Mammary epithelial cell (primary cell): ENCODE measurements at regions of chr15 and their contacts with region 1.

Region 1: GRCh38 chr15:51982013-51982769 is 10.6 kb upstream of the LEO1 start:
- DNase-seq: peak; percentile 76
- H3K4me3 ChIP-seq: peak overlapping the region; percentile 20 to 25 (median 23)
- H3K27ac ChIP-seq: peak overlapping the region; percentile 75
- H3K4me1 ChIP-seq: peaks cover 8% of the 10 kb centered on the region
- H3K27me3 ChIP-seq: no peaks in the 10 kb centered on the region
- CTCF ChIP-seq: peak; percentile 63 to 72

Region 2: GRCh38 chr15:51917493-51917892 is 64.7 kb before region 1 on chr15:
- CTCF ChIA-PET with region 1: no interaction called
- dilution Hi-C with region 1: no loop called
- in situ Hi-C with region 1: no loop called
- intact Hi-C with region 1: no loop called
- DNase-seq: peak; percentile 62
- H3K4me3 ChIP-seq: no peak overlapping the region
- H3K27ac ChIP-seq: no peak overlapping the region
- H3K4me1 ChIP-seq: no peaks in the 10 kb centered on the region
- H3K27me3 ChIP-seq: no peaks in the 10 kb centered on the region
- CTCF ChIP-seq: peak; percentile 42 to 52

Region 3: DNA sequence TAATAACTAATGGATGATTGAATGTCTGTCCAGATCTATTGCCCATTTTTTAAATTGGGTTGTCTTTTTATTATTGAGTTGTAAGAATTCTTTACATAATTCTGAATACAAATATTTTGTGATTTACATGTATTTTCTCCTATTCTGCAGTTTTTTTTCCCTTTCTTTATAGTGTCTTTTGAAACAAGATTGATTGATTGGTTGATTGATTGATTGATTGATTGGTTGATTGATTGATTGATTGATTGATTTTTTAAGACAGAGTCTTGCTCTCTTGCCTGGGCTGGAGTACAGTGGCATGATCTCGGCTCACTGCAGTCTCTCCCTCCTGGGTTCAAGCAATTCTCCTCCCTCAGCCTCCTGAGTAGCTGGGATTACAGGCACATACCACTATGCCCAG is 71.2 kb after region 1 on chr15:
- CTCF ChIA-PET with region 1: no interaction called
- dilution Hi-C with region 1: no loop called
- in situ Hi-C with region 1: no loop called
- intact Hi-C with region 1: loop called (anchors 1 kb)
- DNase-seq: no peak
- H3K4me3 ChIP-seq: no peak overlapping the region
- H3K27ac ChIP-seq: peak overlapping the region; percentile 81
- H3K4me1 ChIP-seq: peaks cover 28% of the 10 kb centered on the region
- H3K27me3 ChIP-seq: no peaks in the 10 kb centered on the region
- CTCF ChIP-seq: no peak

Region 4: DNA sequence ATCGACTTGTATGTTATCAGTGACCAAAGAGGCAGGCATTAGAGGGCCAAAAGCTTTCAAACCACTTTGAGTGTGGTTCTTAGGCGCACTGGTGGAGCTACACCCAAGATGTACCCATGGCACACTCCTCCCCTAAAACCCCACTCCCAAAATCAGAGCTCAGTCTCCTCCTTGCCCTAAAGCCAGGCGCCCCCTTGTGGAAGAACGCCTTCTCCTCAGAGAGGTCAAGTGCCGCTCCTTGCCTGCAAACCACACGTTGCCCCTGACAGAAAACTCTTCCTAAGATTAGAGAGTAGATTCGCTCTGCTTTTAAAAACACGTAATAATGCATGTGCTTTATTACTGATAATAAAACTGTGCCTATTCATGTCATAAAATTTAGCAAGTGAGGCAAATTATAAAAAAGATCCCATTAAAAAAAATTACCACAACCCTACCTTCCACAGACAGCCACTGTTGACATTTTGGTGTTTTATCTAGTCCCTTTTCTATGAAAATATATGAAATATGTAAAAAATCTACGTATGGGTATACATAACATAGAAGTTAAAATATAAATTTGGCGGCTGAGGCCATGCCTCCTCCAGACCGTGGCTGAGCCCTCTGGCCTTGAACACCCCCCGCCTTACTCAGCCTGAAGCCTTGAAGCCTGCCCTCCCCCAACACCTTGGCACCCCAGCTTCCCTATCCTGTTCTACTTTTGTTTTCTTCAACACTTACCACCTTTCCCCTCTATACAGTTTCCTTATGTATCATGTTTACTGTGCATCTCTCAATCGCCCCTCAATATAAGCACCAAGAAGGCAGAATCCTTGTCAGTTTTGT is 96.9 kb after region 1 on chr15:
- CTCF ChIA-PET with region 1: no interaction called
- dilution Hi-C with region 1: no loop called
- in situ Hi-C with region 1: no loop called
- intact Hi-C with region 1: loop called (anchors 1 kb)
- DNase-seq: no peak
- H3K4me3 ChIP-seq: no peak overlapping the region
- H3K27ac ChIP-seq: peak overlapping the region; percentile 94
- H3K4me1 ChIP-seq: peaks cover 49% of the 10 kb centered on the region
- H3K27me3 ChIP-seq: no peaks in the 10 kb centered on the region
- CTCF ChIP-seq: peak; percentile 66 to 79

Region 5: DNA sequence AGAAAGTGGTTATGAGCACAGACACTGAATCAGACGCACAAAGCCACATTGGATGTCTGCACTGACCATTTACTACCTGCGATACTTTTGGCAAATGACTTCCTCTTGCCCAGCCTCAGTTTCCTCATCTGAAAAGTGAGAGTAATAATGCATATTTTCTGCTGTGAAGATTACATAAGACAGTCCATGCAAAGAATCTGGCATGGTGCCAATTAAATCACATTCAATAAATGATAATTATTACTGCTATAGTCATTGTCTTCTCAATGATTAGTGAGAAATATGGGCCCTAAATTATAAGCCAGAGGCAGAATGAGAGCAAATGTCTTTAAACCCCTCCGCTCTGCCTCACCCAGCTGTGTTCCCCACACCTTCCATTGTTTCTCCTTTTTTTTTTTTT is 146.4 kb after region 1 on chr15:
- CTCF ChIA-PET with region 1: no interaction called
- dilution Hi-C with region 1: no loop called
- in situ Hi-C with region 1: no loop called
- intact Hi-C with region 1: no loop called
- DNase-seq: no peak
- H3K4me3 ChIP-seq: no peak overlapping the region
- H3K27ac ChIP-seq: no peak overlapping the region
- H3K4me1 ChIP-seq: peaks cover 10% of the 10 kb centered on the region
- H3K27me3 ChIP-seq: no peaks in the 10 kb centered on the region
- CTCF ChIP-seq: no peak

Region 6: DNA sequence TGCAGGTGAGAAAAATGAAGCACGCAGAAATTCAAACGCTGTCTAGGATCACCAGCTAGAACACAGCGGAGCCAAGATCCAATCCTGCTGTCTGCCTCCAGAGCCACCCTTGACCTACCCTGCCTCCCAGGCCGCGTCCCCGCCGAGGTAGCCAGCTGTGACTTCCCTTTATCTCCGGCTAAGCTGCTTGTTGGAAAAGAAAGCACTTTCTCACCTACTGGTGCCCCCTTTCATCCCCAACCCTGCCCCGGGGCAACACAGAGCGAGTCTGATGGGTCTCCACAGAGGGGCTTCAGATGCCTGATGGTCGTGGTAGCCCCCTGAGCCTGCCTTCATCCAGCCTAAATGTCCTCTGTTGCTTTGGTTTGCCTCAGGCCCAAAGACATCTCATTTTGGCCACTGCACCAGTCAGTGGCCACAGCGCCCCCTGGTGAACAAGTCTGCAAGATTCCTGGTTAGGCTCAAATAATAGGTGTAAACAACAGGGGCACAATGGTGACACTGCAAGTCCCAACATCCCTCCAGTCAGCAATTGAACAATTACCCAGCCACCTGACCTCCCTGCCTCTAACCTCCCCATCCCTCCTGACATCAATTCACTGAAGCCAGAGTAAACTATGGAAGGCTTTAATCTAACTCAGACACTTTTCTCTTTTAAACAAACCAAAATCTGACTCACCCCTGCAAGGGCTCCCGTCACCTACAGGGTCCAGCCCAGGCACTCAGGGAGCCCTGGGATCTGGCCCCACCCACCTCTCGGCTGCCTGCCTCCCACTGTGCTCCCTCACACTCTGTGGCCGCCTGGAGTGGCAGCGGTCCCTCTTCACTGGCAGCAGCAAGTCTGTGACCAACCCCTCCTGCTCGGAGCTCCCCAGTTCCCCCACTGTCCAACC is 157.7 kb after region 1 on chr15:
- CTCF ChIA-PET with region 1: interaction called, 4 read pairs
- dilution Hi-C with region 1: loop called (anchors 5 kb)
- in situ Hi-C with region 1: loop called (anchors 5 to 10 kb)
- intact Hi-C with region 1: loop called (anchors 1 kb)
- DNase-seq: peak; percentile 50
- H3K4me3 ChIP-seq: no peak overlapping the region
- H3K27ac ChIP-seq: no peak overlapping the region
- H3K4me1 ChIP-seq: peaks cover 4% of the 10 kb centered on the region
- H3K27me3 ChIP-seq: no peaks in the 10 kb centered on the region
- CTCF ChIP-seq: peak; percentile 90 to 93

Region 7: DNA sequence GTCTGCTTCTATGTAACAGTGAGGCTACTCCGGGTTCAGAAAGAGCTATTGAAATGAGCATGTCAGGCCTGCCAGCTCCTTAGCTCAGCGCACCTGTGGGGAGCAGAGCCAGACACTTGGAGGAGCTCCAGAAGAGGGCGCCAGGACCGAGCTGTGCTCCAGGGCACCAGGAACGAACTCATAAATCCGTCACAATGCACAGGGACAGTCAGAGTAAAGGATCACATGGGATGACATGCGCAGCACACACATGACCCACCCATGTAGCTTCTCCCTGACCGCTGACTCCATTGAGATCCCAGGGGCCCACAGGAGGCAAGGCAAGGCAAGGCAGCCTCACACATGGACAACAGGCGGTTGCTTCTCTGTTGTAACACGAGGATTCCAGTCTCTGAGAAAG is 235.0 kb after region 1 on chr15:
- CTCF ChIA-PET with region 1: no interaction called
- dilution Hi-C with region 1: no loop called
- in situ Hi-C with region 1: loop called in 1 of 2 experiments (anchors 10 kb)
- intact Hi-C with region 1: no loop called
- DNase-seq: no peak
- H3K4me3 ChIP-seq: no peak overlapping the region
- H3K27ac ChIP-seq: no peak overlapping the region
- H3K4me1 ChIP-seq: no peaks in the 10 kb centered on the region
- H3K27me3 ChIP-seq: no peaks in the 10 kb centered on the region
- CTCF ChIP-seq: peak in 1 of 2 donors; percentile 34

Region 8: DNA sequence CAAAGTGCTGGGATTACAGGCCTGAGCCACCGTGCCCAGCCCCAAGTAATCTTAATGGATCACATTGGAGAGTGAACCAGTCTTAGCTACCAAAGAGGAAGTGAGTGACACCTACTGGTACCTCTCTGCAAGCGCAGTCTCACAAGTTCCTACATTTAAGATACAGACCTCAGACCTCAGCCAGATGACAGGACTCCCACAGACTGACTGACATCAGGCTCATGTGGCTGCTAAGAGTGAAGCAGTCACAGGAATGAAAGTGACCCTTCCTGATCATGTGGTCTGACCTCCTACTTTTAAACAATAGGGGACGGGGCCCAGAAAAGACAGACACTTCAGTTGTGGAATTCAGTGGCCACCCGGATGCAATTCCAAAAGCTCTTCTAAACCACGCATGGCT is 245.3 kb after region 1 on chr15:
- CTCF ChIA-PET with region 1: no interaction called
- dilution Hi-C with region 1: no loop called
- in situ Hi-C with region 1: no loop called
- intact Hi-C with region 1: loop called (anchors 2 kb)
- DNase-seq: peak; percentile 71
- H3K4me3 ChIP-seq: no peak overlapping the region
- H3K27ac ChIP-seq: no peak overlapping the region
- H3K4me1 ChIP-seq: peaks cover 3% of the 10 kb centered on the region
- H3K27me3 ChIP-seq: no peaks in the 10 kb centered on the region
- CTCF ChIP-seq: peak; percentile 78 to 87